ENCODE measurements at regions of chr7 and their contacts with region 1.

Region 1: DNA sequence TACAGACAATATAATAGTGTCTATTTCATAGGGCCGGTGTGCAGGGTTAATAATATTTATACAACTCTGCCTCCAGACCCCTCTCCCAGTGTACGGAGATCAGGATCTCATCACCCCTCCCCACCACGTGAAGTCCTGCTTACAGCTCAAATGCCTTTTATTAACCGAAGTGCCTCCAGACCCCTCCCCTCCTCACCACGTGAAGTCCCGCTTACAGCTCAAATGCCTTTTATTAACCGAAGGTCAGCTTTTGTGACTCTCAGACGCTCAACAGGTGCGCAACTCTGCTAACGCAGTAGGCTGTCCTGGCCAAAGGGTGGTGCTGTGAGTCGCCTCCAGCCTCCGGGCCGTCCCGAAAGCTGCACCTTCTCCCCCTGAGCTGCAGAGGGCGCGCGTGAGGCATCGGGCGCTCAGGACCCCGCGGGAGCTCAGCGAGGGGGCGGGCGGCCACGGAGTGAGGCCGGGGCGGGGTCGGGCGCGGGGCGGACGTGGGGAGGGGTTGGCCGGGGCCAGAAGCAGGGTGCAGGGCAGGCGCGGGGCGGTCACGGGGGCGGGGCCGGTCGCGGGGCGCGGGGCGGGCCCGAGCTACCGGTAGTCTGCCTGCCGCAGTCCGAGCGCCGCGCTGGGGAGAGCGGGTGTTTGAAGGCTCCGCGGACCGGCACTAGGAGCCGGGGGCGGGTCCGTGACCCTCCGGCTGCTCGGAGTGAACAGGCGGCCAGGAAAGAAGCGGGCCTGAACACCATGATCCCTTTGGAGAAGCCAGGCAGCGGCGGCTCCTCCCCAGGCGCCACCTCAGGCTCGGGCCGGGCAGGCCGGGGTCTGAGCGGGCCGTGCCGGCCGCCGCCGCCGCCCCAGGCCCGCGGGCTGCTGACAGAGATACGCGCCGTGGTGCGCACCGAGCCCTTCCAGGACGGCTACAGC is at the start of gene STK17A:
- DNase-seq: peak; percentile 81 to 98 (median 86)

Region 2: GRCh38 chr7:43602271-43602670 is 19.5 kb after region 1 on chr7:
- intact Hi-C with region 1: no loop called
- DNase-seq: no peak

Region 3: GRCh38 chr7:43649755-43650274 is 67.1 kb after region 1 on chr7:
- intact Hi-C with region 1: loop called (anchors 5 kb)
- DNase-seq: no peak

Region 4: GRCh38 chr7:43700059-43700501 is 117.3 kb after region 1 on chr7:
- intact Hi-C with region 1: loop called (anchors 1 kb)
- DNase-seq: no peak

Region 5: GRCh38 chr7:43834463-43835251 is 251.9 kb after region 1 on chr7:
- intact Hi-C with region 1: loop called (anchors 1 kb)
- DNase-seq: no peak

Measured in posterior cingulate gyrus (tissue), 11 donors.